Caco-2 (cell line): ENCODE measurements at regions of chr4 and their contacts with region 1.

Region 1: GRCh38 chr4:156169011-156169410 is 215.3 kb upstream of the CTSO start:
- DNase-seq: peak; percentile 38 to 43
- H3K4me3 ChIP-seq: no peak overlapping the region
- H3K4me3 Mint-ChIP-seq: no peak overlapping the region
- H3K27ac Mint-ChIP-seq: no peak overlapping the region
- H3K4me1 ChIP-seq: no peaks in the 10 kb centered on the region
- H3K4me1 Mint-ChIP-seq: peaks cover 8% of the 10 kb centered on the region
- H3K27me3 ChIP-seq: no peaks in the 10 kb centered on the region
- H3K27me3 Mint-ChIP-seq: peaks cover 7% of the 10 kb centered on the region
- CTCF ChIP-seq: peak; percentile 42 to 60

Region 2: DNA sequence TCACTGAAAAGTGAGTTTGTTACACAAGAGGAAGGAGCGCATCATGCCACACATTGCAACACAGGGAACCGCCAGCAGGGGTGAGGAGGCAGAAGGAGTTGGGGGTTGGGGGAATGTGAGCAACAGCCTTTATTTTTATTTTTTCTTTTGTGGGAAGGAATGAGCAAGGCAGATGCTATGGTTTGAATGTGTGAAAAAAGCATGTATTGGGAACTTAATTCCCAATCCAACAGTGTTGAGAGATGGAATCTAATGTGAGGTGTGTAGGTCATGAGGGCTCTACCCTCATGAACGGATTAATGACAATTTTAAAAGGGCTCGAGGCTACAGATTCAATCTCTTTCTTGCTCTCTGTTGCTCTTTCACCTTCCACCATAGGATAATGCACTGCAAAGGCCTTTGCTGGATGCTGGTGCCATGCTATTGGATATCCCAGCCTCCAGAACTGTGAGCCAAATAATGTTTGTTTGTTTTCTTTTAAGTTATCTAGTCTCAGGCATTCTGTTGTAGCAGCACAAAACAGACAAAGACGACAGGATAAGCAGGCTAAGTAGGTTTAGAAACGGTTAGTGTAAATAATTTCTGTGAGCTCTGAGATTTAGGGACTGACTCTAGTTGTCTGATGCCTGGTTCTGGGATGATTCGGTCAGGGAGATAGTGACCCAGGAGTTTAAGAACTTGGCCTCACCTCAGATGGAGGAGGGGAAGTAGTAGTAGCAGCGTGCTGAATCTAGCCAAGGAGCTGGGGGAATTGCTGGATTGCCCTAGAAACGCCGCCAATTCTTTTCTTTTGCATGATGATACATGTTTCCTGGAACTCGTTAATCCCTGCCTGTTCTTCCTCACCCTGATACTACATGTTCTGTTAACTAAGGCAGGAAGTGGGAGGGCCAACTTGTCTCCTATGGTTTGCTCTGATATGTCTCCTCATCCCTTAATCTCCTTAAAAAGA is 58.8 kb before region 1 on chr4:
- CTCF ChIA-PET with region 1: no interaction called
- POLR2A ChIA-PET with region 1: no interaction called
- intact Hi-C with region 1: no loop called
- DNase-seq: peak in 1 of 2 experiments; percentile 11
- H3K4me3 ChIP-seq: no peak overlapping the region
- H3K4me3 Mint-ChIP-seq: no peak overlapping the region
- H3K27ac Mint-ChIP-seq: no peak overlapping the region
- H3K4me1 ChIP-seq: no peaks in the 10 kb centered on the region
- H3K4me1 Mint-ChIP-seq: no peaks in the 10 kb centered on the region
- H3K27me3 ChIP-seq: no peaks in the 10 kb centered on the region
- H3K27me3 Mint-ChIP-seq: no peaks in the 10 kb centered on the region
- CTCF ChIP-seq: no peak

Region 3: DNA sequence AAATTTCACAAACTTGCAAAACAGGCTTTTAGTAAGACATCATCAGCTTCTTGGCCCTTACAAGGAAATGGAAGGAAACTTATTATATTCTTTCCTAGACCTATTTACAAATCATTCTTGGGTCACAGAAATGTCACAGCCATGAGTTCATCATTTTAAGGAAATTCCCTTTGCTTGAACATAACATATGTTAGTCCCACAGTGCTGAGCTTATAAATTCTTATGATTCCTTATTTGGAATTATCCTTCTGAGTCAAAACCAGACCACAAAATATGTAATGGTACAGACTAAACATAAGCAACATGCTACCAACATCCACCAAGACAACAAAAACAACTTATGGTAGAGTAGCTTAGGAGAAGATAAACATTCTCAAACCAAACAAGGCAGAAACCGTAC is 21.6 kb after region 1 on chr4:
- CTCF ChIA-PET with region 1: interaction called, 11 read pairs
- POLR2A ChIA-PET with region 1: no interaction called
- intact Hi-C with region 1: no loop called
- DNase-seq: no peak
- H3K4me3 ChIP-seq: no peak overlapping the region
- H3K4me3 Mint-ChIP-seq: no peak overlapping the region
- H3K27ac Mint-ChIP-seq: no peak overlapping the region
- H3K4me1 ChIP-seq: peaks cover 11% of the 10 kb centered on the region
- H3K4me1 Mint-ChIP-seq: peaks cover 11% of the 10 kb centered on the region
- H3K27me3 ChIP-seq: no peaks in the 10 kb centered on the region
- H3K27me3 Mint-ChIP-seq: no peaks in the 10 kb centered on the region
- CTCF ChIP-seq: no peak

Region 4: DNA sequence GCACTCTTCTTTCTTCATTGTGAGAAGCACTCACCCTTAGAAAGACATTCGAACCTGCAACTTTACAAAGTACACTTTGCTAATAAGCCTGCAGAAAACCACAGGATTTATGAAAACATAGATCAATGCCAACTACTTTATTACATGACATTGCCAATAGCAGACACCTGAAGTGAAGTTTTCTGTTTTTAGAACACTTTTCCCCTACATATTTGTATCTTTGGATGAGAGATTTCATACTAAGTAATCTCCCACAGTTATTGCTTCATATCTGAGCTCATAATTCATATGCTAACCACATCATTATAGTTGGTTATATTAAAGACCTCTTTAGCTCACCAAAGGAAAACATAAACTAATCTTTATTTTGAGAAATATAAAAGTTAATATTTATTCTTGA is 61.2 kb after region 1 on chr4:
- CTCF ChIA-PET with region 1: no interaction called
- POLR2A ChIA-PET with region 1: no interaction called
- intact Hi-C with region 1: no loop called
- DNase-seq: no peak
- H3K4me3 ChIP-seq: no peak overlapping the region
- H3K4me3 Mint-ChIP-seq: no peak overlapping the region
- H3K27ac Mint-ChIP-seq: no peak overlapping the region
- H3K4me1 ChIP-seq: no peaks in the 10 kb centered on the region
- H3K4me1 Mint-ChIP-seq: no peaks in the 10 kb centered on the region
- H3K27me3 ChIP-seq: no peaks in the 10 kb centered on the region
- H3K27me3 Mint-ChIP-seq: no peaks in the 10 kb centered on the region
- CTCF ChIP-seq: no peak

Region 5: GRCh38 chr4:156294577-156294976 is 125.6 kb after region 1 on chr4:
- CTCF ChIA-PET with region 1: no interaction called
- POLR2A ChIA-PET with region 1: no interaction called
- intact Hi-C with region 1: loop called (anchors 10 kb)
- DNase-seq: peak in 1 of 2 experiments; percentile 8
- H3K4me3 ChIP-seq: no peak overlapping the region
- H3K4me3 Mint-ChIP-seq: no peak overlapping the region
- H3K27ac Mint-ChIP-seq: no peak overlapping the region
- H3K4me1 ChIP-seq: peaks cover 16% of the 10 kb centered on the region
- H3K4me1 Mint-ChIP-seq: peaks cover 15% of the 10 kb centered on the region
- H3K27me3 ChIP-seq: no peaks in the 10 kb centered on the region
- H3K27me3 Mint-ChIP-seq: no peaks in the 10 kb centered on the region
- CTCF ChIP-seq: peak in 1 of 2 experiments; percentile 40

Region 6: GRCh38 chr4:156475322-156475721 is 306.3 kb after region 1 on chr4:
- CTCF ChIA-PET with region 1: no interaction called
- POLR2A ChIA-PET with region 1: no interaction called
- intact Hi-C with region 1: loop called (anchors 1 kb)
- DNase-seq: peak in 1 of 2 experiments; percentile 5
- H3K4me3 ChIP-seq: no peak overlapping the region
- H3K4me3 Mint-ChIP-seq: no peak overlapping the region
- H3K27ac Mint-ChIP-seq: no peak overlapping the region
- H3K4me1 ChIP-seq: no peaks in the 10 kb centered on the region
- H3K4me1 Mint-ChIP-seq: no peaks in the 10 kb centered on the region
- H3K27me3 ChIP-seq: no peaks in the 10 kb centered on the region
- H3K27me3 Mint-ChIP-seq: no peaks in the 10 kb centered on the region
- CTCF ChIP-seq: peak; percentile 29 to 46